AG04450 (cell line): ENCODE measurements at regions of chr3 and their contacts with region 1.

Region 1: DNA sequence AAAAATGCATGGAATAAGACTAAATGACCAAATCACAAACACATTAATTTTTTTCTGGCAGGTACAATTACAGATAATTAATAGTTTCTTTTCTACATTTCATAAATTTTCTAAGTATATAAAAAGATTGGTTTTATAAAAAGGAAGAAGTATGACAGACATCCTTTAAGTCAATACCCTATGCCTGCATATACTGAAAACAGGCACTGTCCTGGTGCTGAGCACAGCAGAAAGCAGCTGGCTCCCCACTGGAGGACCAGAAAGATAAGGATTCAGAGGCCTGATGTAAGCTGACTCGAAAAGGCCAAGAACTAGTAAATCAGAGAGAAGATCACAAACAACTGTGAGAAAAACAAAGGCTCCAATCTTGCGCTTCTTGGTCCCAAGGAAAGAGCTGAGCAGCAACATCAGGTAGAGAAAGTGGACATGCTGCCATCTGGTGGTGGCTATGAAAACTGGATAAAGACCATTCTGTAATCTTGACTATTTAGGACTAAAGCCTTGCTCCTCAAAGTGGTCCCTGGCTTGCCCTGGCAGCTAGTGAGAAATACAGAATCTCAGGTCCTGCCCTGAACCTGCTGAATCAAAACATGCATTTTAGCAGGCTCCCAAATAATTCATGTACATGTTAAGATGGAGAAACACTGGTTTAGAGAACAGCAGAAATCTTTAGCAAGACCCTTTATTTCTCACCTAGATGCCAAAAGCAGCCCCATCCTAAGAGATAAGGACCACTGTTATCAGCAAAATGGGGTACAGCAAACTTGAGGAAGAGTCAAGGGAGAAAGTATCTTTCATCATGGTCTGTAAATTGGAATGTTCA is 76.0 kb downstream of the TRANK1 start:
- DNase-seq: peak; percentile 32
- H3K4me3 ChIP-seq: no peak overlapping the region
- H3K27ac ChIP-seq: no peak overlapping the region
- H3K27me3 ChIP-seq: no peaks in the 10 kb centered on the region
- CTCF ChIP-seq: peak; percentile 84

Region 2: DNA sequence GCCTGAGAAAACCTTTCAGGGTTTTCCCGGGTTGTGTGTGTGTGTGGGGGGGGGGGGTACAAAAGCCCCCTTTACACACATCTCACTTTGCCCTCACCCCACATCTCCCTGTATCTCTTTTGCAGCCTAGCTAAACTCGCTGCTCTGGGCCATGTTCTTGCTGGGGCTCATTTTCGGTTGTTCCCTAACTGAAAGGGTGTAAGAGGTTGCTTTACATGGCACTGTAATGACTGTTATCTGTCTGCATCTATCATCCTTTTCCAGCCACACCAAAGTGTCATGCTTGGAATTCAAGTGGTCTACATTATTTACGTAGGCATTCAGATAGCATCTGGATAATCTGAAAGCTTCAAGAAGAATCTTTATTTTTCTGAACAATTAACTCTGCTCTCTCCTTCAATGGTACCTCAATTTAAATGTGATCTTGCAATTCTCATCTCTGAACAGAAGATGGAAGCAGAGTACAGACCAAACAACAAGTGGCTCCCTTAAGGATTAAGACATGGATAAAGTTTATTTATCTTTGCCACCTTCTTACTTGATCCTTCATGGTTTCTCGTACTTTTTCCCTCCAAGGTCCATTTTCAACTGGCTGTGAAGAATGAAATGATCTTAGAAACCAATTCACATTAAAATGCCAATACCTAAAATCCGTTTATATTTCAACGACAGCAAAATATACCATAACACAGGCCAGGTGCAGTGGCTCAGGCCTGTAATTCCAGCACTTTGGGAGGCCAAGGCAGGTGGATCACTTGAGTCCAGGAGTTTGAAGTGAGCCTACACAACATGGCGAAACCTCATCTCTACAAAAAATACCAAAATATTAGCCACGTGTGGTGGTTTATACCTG is 139.4 kb before region 1 on chr3:
- CTCF ChIA-PET with region 1: interaction called, 38 read pairs
- POLR2A ChIA-PET with region 1: no interaction called
- DNase-seq: peak; percentile 23
- H3K4me3 ChIP-seq: no peak overlapping the region
- H3K27ac ChIP-seq: no peak overlapping the region
- H3K27me3 ChIP-seq: peaks cover 9% of the 10 kb centered on the region
- CTCF ChIP-seq: peak; percentile 78

Region 3: GRCh38 chr3:36734742-36735141 is 134.1 kb before region 1 on chr3:
- CTCF ChIA-PET with region 1: interaction called, 38 read pairs
- POLR2A ChIA-PET with region 1: no interaction called
- DNase-seq: no peak
- H3K4me3 ChIP-seq: no peak overlapping the region
- H3K27ac ChIP-seq: no peak overlapping the region
- H3K27me3 ChIP-seq: no peaks in the 10 kb centered on the region
- CTCF ChIP-seq: no peak

Region 4: DNA sequence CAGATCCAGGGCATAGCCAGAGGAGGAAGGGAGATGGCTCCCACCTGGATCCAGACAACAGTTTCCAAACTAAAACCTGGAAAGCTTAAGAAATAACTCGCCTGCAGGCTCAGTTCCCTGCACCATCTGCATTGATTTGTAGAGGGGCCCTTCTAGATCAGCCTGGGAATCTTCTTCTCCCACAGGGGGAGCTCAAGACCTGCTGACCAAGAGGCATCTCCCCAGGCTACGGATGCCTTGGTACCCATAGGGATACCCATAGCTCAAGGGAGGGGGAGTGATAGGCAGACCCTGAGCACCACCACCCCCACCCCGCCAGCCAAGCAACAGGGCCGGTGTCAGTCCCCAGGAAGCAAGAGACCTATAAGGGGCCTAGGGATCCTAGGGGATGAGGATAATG is 76.5 kb before region 1 on chr3:
- CTCF ChIA-PET with region 1: interaction called, 26 read pairs
- POLR2A ChIA-PET with region 1: no interaction called
- DNase-seq: peak; percentile 3
- H3K4me3 ChIP-seq: no peak overlapping the region
- H3K27ac ChIP-seq: no peak overlapping the region
- H3K27me3 ChIP-seq: peaks cover 16% of the 10 kb centered on the region
- CTCF ChIP-seq: peak; percentile 65

Region 5: GRCh38 chr3:36852071-36852470 is 16.8 kb before region 1 on chr3:
- CTCF ChIA-PET with region 1: interaction called, 26 read pairs
- POLR2A ChIA-PET with region 1: no interaction called
- DNase-seq: no peak
- H3K4me3 ChIP-seq: no peak overlapping the region
- H3K27ac ChIP-seq: no peak overlapping the region
- H3K27me3 ChIP-seq: no peaks in the 10 kb centered on the region
- CTCF ChIP-seq: no peak

Region 6: DNA sequence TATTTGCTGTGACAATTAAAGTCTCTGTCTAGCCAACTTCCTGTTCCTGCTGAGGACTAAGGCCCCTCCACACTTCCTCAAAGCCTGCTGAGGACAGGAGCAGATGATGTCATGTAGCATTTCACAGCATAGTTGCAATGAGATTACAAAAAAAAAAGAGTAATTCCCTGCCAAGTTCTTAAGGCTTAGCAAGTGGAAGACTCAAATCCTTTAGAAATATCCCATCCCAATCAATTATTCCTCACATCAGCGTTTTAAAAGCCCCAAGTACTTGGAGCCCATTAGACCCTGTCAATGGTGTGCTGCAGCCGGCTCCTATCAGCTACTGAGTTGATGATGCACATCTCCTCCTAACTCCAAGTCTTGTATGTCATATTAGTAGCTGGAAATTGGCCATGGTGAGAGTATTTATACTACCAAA is 24.3 kb after region 1 on chr3:
- CTCF ChIA-PET with region 1: interaction called, 44 read pairs
- POLR2A ChIA-PET with region 1: no interaction called
- DNase-seq: no peak
- H3K4me3 ChIP-seq: no peak overlapping the region
- H3K27ac ChIP-seq: no peak overlapping the region
- H3K27me3 ChIP-seq: no peaks in the 10 kb centered on the region
- CTCF ChIP-seq: no peak

Region 7: GRCh38 chr3:36911990-36912804 is 43.4 kb after region 1 on chr3:
- CTCF ChIA-PET with region 1: interaction called, 10 read pairs
- POLR2A ChIA-PET with region 1: no interaction called
- DNase-seq: peak; percentile 81
- H3K4me3 ChIP-seq: peak overlapping the region; percentile 41
- H3K27ac ChIP-seq: peak overlapping the region; percentile 82
- H3K27me3 ChIP-seq: no peaks in the 10 kb centered on the region
- CTCF ChIP-seq: no peak